GM10248 (cell line): ENCODE measurements at regions of chr22 and their contacts with region 1.

Region 1: DNA sequence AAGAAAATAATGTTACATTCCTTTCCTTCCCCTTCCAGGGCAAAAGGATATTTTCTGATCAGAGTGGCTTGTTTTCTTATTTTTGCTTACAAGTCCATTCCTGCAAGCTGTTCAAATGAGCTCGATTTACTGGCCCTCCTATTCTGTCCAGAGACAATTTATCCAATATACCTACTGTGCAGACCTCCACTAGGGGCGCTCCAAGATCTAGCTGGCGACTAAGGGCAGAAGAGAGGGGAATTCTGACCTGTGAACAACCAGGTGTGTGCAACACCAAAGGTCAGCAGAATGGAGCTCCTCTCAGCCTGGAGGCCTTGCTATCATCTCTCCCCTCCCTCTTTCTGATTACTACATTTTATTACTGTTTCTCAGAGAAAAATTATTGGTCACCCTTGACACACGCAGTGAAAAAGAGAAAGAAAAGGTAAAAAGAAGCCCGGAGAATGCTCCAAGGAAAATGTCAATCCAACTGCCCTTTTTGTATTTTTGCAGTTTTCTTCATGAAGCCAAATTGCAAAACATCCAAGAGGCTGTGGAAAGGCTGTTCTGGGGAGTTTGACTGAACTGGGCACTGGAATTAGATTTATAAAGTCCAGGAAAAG is 3.2 kb downstream of the SEZ6L start:
- DNase-seq: peak; percentile 42
- CTCF ChIP-seq: peak; percentile 69

Region 2: DNA sequence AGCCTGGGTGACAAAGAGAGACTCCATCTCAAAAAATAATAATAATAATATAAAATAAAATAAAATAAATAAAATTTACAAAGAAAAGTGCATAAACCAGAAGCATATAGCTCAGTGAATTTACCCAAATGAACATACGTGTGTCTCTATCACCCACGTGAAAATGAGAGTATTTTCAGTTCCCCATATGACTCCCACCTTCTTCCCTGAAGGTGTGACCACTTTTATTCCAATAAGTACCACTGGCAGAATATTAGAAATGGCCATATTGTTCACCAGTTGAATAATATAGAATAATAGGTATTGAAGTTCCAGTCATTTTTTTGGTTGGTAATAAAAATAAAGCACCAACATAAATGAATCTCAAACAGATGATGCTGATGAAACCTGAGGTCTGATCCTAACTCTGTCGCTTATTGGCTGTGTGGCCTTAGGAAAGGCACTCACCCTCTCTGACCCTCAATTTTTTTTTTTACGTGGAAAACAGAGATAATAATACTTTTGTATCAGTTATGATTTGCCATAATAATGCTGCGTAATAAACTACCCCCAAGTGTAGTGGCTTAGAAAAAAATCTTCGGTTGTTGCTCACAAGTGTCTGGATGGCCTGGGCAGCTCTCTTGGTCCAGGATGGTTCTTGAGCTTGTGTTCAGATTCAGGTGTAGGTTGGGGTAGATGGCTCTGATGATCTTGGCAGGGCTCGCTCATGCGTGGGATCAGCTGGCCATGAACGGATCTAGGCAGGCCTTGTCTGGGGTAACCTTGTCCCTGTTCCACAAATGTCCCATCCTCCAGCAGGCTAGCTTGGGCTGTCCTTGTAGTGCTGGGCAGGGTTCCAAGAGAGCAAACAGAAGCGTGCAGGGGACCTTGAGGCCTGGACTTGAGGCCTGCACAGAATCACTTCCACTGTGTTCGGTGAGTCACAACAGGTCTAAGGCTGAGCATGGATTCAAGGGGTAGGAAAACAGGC is 342.4 kb before region 1 on chr22:
- CTCF ChIA-PET with region 1: no interaction called
- POLR2A ChIA-PET with region 1: no interaction called
- DNase-seq: no peak
- CTCF ChIP-seq: no peak

Region 3: GRCh38 chr22:26086359-26086758 is 86.1 kb before region 1 on chr22:
- CTCF ChIA-PET with region 1: no interaction called
- POLR2A ChIA-PET with region 1: no interaction called
- DNase-seq: no peak
- CTCF ChIP-seq: no peak

Region 4: DNA sequence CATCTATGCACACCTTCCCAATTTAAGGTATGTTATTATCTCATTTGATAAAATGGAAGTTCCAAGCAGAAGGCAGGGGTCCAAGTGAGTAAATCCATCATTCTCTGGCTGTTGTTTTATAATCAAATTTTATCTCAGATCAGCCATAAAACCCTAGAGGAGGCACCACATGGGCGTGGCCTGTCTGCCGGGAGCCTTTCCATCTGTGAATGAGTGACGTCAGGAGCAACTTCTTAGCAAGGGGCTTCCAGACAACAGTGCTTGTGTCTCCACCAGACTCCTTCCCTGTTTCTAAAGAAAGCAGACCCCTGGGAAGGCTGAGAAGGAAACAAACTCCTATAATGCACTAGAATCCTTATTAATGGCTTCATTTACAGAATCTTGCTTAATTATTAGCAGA is 10.2 kb after region 1 on chr22:
- CTCF ChIA-PET with region 1: interaction called, 10 read pairs
- POLR2A ChIA-PET with region 1: no interaction called
- DNase-seq: no peak
- CTCF ChIP-seq: no peak